Stomach (tissue), 19 donors: ENCODE measurements at regions of chr16 and their contacts with region 1.

Region 1: DNA sequence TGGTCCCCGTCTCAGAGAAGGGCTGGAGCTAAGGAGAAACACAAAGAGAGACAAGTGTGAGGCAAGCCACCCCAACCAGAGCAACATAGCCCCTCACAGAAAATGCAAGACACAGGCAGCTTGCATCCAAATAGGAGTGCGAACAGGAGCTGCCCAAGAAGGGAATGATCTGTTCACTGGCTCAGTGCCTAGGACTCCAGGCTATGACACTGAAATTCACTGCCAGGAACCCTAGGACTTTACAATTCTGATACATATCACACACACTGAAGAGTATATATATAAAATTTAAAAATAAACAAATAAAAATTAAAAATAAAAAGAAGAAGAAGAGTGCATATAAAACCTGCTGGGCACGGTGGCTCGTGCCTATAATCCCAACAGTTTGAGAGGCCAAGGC is 5.2 kb downstream of the ZNF23 start:
- DNase-seq: no peak
- H3K4me3 ChIP-seq: no peak overlapping the region
- H3K27ac ChIP-seq: no peak overlapping the region
- H3K4me1 ChIP-seq: peaks cover 14 to 23% (median 18%) of the 10 kb centered on the region in 4 donors
- H3K27me3 ChIP-seq: no peaks in the 10 kb centered on the region
- CTCF ChIP-seq: no peak
- EP300 ChIP-seq: no peak
- POLR2A ChIP-seq: no peak

Region 2: DNA sequence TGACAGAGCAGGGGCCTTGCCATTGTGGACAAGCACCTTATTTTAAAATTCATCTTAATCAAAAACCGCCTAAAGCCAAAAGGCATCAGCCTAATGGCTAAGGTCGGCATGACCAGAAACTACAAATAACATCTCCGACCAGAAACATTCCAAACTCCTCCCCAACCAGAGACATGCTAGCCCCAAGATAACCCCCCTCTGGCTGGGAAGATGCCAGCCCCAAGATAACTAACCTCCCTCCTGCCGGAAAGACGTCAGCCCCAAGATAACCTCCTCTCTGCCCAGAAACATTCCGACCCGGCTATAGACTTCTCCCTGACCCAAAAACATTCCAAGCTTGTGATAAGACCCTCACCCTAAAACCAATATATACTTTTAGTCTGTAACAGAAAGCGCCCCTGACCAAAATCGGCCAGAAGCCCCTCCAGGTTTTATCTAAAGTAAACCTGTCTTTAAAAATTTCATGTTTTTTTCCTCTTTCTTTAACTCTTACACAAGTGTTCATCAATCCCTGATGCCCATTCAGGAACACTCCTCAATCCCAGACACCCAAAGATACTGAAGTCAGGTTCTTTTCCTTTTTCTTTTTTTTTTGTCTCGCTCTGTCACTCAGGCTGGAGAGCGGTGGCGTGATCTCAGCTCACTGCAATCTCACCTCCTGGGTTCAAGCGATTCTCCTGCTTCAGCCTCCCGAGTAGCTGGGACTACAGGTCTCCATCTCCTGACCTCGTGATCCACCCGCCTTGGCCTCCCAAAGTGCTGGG is 47.6 kb before region 1 on chr16:
- intact Hi-C with region 1: no loop called
- DNase-seq: no peak
- H3K4me3 ChIP-seq: no peak overlapping the region
- H3K27ac ChIP-seq: no peak overlapping the region
- H3K4me1 ChIP-seq: peaks cover 0 to 10% (median 9%) of the 10 kb centered on the region in 4 donors
- H3K27me3 ChIP-seq: peaks cover 0 to 77% (median 26%) of the 10 kb centered on the region in 3 donors
- CTCF ChIP-seq: no peak
- EP300 ChIP-seq: no peak
- POLR2A ChIP-seq: no peak

Region 3: GRCh38 chr16:71493213-71493612 is 36.4 kb after region 1 on chr16:
- intact Hi-C with region 1: loop called (anchors 5 kb)
- DNase-seq: no peak
- H3K4me3 ChIP-seq: no peak overlapping the region
- H3K27ac ChIP-seq: no peak overlapping the region
- H3K4me1 ChIP-seq: no peaks in the 10 kb centered on the region
- H3K27me3 ChIP-seq: no peaks in the 10 kb centered on the region
- CTCF ChIP-seq: no peak
- EP300 ChIP-seq: no peak
- POLR2A ChIP-seq: no peak